ENCODE measurements at regions of chr3 and their contacts with region 1.

Region 1: GRCh38 chr3:18295171-18295920 is 129.8 kb downstream of the SATB1 start:
- DNase-seq: peak; percentile 68
- H3K4me3 ChIP-seq: no peak overlapping the region
- H3K27ac ChIP-seq: no peak overlapping the region
- H3K4me1 ChIP-seq: no peaks in the 10 kb centered on the region
- CTCF ChIP-seq: peak; percentile 86

Region 2: DNA sequence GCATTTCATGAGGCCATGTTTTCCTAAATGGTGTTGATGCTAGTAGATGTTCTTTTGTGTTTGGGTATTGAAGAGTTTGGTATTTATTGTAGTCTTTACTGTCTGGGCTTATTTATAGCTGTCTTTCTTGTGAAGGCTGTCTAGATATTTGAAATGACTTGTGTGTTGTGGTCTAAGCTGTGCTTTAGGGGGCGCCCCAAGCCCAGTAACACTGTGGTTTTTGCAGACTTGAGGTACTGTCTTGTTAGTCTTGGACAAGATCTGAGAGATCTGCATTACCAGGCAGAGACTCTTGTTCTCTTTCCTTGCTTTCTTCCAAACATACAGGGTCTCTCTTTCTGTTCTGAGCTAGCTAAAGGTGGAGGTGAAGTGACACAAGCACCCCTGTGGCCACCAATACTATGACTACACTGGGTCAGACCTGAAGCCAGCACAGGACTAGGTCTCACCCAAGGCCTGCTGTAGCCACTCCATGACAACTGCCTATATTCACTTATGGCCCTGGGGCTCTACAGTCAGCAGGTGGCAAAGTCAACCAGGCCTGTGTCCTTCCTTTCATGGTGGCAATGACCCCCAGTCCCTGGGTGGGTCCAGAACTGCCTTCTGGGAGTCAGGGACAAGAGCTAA is 400.8 kb before region 1 on chr3:
- CTCF ChIA-PET with region 1: no interaction called
- POLR2A ChIA-PET with region 1: no interaction called
- intact Hi-C with region 1: loop called (anchors 1 kb)
- DNase-seq: peak; percentile 76
- H3K4me3 ChIP-seq: no peak overlapping the region
- H3K27ac ChIP-seq: no peak overlapping the region
- H3K4me1 ChIP-seq: no peaks in the 10 kb centered on the region
- CTCF ChIP-seq: peak; percentile 86

Region 3: GRCh38 chr3:17979252-17979651 is 316.1 kb before region 1 on chr3:
- CTCF ChIA-PET with region 1: no interaction called
- POLR2A ChIA-PET with region 1: no interaction called
- intact Hi-C with region 1: loop called (anchors 10 kb)
- DNase-seq: peak; percentile 34
- H3K4me3 ChIP-seq: no peak overlapping the region
- H3K27ac ChIP-seq: no peak overlapping the region
- H3K4me1 ChIP-seq: no peaks in the 10 kb centered on the region
- CTCF ChIP-seq: peak; percentile 66

Measured in OCI-LY7 (cell line).